ENCODE measurements at regions of chr19 and their contacts with region 1.

Region 1: GRCh38 chr19:39187559-39187957 is 9.2 kb upstream of the NCCRP1 start:
- DNase-seq: no peak
- ATAC-seq: no peak
- H3K4me3 Mint-ChIP-seq: no peak overlapping the region
- H3K27ac Mint-ChIP-seq: no peak overlapping the region
- H3K4me1 Mint-ChIP-seq: no peaks in the 10 kb centered on the region
- H3K27me3 Mint-ChIP-seq: peaks cover 9% of the 10 kb centered on the region

Region 2: GRCh38 chr19:39110263-39110967 is 77.1 kb before region 1 on chr19:
- CTCF ChIA-PET with region 1: no interaction called
- POLR2A ChIA-PET with region 1: no interaction called
- intact Hi-C with region 1: loop called in 1 of 2 experiments (anchors 1 kb)
- DNase-seq: peak; percentile 85
- ATAC-seq: peak; percentile 86
- H3K4me3 Mint-ChIP-seq: no peak overlapping the region
- H3K27ac Mint-ChIP-seq: no peak overlapping the region
- H3K4me1 Mint-ChIP-seq: no peaks in the 10 kb centered on the region
- H3K27me3 Mint-ChIP-seq: no peaks in the 10 kb centered on the region

Region 3: DNA sequence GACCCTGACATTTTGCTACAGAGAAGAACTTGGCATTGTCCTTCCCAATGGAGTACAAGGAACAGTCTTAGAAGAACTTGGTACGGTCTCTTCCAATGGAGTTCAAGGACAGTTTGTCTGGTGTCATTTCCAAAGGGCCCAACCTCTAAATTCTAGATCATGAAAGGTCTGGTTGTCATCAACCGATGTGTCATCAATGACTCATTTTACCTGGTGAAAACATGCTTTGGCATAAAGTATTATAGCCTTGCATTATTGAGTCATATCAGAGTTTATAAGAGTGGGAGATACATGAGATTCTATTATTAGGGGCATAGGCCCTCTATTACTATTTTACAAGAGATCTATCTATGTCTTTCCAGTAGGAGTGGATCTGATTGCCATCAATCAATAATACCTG is 1807.8 kb after region 1 on chr19:
- CTCF ChIA-PET with region 1: no interaction called
- POLR2A ChIA-PET with region 1: no interaction called
- intact Hi-C with region 1: no loop called
- DNase-seq: no peak
- ATAC-seq: peak; percentile 89
- H3K4me3 Mint-ChIP-seq: no peak overlapping the region
- H3K27ac Mint-ChIP-seq: no peak overlapping the region
- H3K4me1 Mint-ChIP-seq: peaks cover 8% of the 10 kb centered on the region
- H3K27me3 Mint-ChIP-seq: peaks cover 10% of the 10 kb centered on the region